HepG2 (cell line): ENCODE measurements at regions of chr16 and their contacts with region 1.

Region 1: GRCh38 chr16:57462209-57462977 is at the start of gene POLR2C:
- DNase-seq: peak; percentile 80
- ATAC-seq: peak; percentile 97
- H3K4me3 ChIP-seq: peak within 1 kb of the TSS; percentile 94 to 100 (median 99)
- H3K27ac ChIP-seq: peak within 1 kb of the TSS; percentile 63
- H3K4me1 ChIP-seq: peaks cover 33% of the 10 kb centered on the region
- H3K27me3 ChIP-seq: no peaks in the 10 kb centered on the region; a peak in 1 of 5 replicates
- CTCF ChIP-seq: peak; percentile 99
- EP300 ChIP-seq: 0 out of 4 replicates have a peak, but pooled peaks of 1 of the 2 experiments have one; percentile 34
- POLR2A ChIP-seq: peak; percentile 99
- RAD21 ChIP-seq: peak; percentile 92
- total RNA-seq, gene POLR2C: 104 and 146 TPM in 2 replicates

Region 2: GRCh38 chr16:57255686-57256415 is 206.5 kb before region 1 on chr16:
- CTCF ChIA-PET with region 1: no interaction called
- POLR2A ChIA-PET with region 1: no interaction called
- in situ Hi-C with region 1: no loop called
- intact Hi-C with region 1: no loop called
- DNase-seq: no peak
- ATAC-seq: no peak
- H3K4me3 ChIP-seq: no peak overlapping the region
- H3K27ac ChIP-seq: no peak overlapping the region
- H3K4me1 ChIP-seq: peaks cover 23% of the 10 kb centered on the region
- H3K27me3 ChIP-seq: no peaks in the 10 kb centered on the region
- CTCF ChIP-seq: no peak
- EP300 ChIP-seq: no peak
- POLR2A ChIP-seq: no peak
- RAD21 ChIP-seq: no peak

Region 3: DNA sequence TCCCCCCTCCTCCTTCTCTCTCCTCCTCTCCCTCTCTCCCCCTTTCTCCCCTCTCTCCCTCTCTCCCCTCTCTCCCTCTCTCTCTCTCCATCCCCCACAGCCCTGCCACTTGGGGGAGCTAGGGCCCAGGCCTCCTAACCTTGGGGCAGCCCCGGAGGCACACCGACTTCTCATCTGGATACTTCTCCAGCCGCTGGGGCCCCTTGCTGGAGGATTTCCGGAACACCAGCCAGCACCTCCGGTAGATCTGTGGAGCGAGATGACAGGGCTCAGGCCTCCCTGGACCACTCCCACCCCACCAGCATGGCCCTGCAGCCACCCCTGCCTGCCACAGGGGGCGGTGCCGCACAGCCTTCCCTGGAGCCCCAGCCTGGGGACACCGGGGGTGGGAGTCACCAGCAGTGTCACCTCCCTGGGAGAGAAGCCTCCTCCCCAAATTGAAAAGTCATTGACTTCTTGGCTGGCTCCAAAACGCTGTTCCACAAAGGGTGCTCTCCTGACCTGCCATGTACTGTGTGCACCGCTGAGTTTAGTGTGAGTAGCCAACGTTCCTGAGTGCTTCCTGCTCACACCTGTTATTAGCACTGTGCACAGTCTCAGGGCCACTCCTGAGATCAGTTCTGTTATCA is 13.4 kb after region 1 on chr16:
- CTCF ChIA-PET with region 1: interaction called, 5 read pairs
- POLR2A ChIA-PET with region 1: interaction called, 47 read pairs
- in situ Hi-C with region 1: no loop called
- intact Hi-C with region 1: no loop called
- DNase-seq: peak; percentile 69
- ATAC-seq: peak; percentile 73
- H3K4me3 ChIP-seq: no peak overlapping the region
- H3K27ac ChIP-seq: peak overlapping the region; percentile 11
- H3K4me1 ChIP-seq: peaks cover 84% of the 10 kb centered on the region
- H3K27me3 ChIP-seq: no peaks in the 10 kb centered on the region
- CTCF ChIP-seq: peak; percentile 64
- EP300 ChIP-seq: 0 out of 4 replicates have a peak, but pooled peaks of 1 of the 2 experiments have one; percentile 21
- POLR2A ChIP-seq: no peak
- RAD21 ChIP-seq: peak; percentile 94